ENCODE measurements at regions of chr14 and their contacts with region 1.

Region 1: GRCh38 chr14:75560962-75561432 is 17.4 kb upstream of the FLVCR2 start:
- DNase-seq: peak; percentile 79 to 88
- H3K4me3 ChIP-seq: no peak overlapping the region
- H3K27ac ChIP-seq: no peak overlapping the region
- H3K4me1 ChIP-seq: peaks cover 0 to 4% (median 2%) of the 10 kb centered on the region in 4 experiments; a peak in 3 of 7 replicates
- H3K27me3 ChIP-seq: no peaks in the 10 kb centered on the region
- CTCF ChIP-seq: peak; percentile 87 to 97 (median 90)
- EP300 ChIP-seq: peak in 1 of 2 experiments; percentile 67; a peak in 1 of 3 replicates
- POLR2A ChIP-seq: no peak
- RAD21 ChIP-seq: peak; percentile 90 to 93

Region 2: DNA sequence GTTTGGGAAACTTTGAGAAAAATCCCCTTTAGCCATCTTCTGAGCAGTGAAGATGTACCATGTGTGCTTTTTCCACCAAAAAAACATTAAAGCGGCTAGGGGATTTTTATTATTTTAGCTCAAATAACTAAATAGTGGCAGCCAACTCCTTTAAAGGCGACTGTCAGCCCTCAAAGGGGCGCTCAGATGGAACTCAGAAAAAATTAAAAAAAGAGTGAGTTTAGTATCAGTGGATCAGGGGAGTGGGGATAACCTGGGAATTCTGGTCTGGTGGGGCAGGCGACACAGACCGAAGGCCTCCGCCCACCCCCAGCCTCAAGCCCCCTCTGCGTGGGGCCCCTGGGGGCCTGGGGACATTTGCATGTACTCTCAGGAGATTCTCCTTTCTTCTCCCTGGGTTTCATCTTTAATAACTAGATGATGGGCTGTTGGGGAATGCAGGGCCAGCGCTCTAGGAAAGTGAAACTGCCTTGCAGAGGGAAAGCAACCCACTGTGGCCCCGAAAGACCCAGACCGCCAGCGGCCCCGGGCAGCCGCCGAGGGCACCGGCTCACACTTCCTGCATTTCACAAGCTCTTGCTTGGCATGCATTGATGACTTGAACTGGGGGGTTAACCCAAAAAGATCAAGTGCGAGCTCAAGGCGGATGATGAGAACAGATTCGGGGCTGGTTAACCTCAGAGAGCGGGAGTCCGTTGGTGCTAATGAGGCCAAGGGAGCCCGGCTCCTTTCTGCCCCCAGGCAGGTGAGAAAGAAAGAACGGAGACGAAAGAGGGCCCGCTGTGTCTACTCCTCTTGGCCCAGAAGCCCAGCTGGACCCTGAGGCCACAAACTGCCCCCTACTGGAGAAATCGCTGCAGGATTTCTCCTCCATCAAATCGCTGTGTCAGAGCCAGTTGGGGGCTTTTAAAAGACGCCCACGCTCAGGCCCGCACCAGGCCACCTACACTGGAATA is 46.0 kb before region 1 on chr14:
- CTCF ChIA-PET with region 1: interaction called, 135 read pairs
- POLR2A ChIA-PET with region 1: no interaction called
- DNase-seq: peak in 1 of 2 experiments; percentile 53
- H3K4me3 ChIP-seq: no peak overlapping the region
- H3K27ac ChIP-seq: no peak overlapping the region
- H3K4me1 ChIP-seq: peaks cover 0 to 4% (median 1%) of the 10 kb centered on the region in 4 experiments; a peak in 1 of 7 replicates
- H3K27me3 ChIP-seq: no peaks in the 10 kb centered on the region
- CTCF ChIP-seq: peak; percentile 15 to 47 (median 37)
- EP300 ChIP-seq: no peak
- POLR2A ChIP-seq: no peak
- RAD21 ChIP-seq: peak; percentile 22 to 45

Region 3: DNA sequence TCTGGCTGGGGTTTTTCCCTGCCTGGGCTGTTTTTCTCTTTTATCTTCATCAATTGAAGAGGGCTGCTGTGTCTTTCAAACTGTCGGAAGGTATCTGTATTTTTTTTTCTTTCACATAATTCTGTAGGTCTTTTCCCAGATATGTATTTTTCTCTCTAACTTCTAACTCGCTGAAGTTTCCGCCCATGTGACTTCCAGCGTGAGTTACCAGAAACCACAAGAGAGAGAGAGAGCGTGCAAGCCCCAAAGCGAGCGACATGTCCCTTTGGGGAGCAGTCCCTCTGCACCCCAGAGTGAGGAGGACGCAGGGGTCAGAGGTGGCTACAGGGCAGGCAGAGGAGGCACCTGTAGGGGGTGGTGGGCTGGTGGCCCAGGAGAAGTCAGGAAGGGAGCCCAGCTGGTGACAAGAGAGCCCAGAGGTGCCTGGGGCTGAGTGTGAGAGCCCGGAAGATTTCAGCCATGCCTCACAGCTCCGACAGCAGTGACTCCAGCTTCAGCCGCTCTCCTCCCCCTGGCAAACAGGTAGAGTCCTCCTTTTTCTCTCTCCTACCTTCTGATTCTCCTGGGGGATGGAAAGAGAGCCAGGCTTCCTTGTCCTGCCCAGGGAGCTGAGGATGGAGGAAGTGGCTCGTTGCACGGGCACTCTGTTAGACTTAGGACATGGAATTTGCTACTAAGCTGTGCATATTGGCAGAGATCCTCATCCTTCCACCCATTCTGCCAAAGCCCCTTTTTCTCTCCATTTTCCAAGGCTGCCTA is 38.6 kb before region 1 on chr14 and contains the start of gene BATF:
- CTCF ChIA-PET with region 1: interaction called, 135 read pairs
- POLR2A ChIA-PET with region 1: no interaction called
- DNase-seq: no peak
- H3K4me3 ChIP-seq: no peak within 1 kb of the TSS
- H3K27ac ChIP-seq: no peak within 1 kb of the TSS
- H3K4me1 ChIP-seq: no peaks in the 10 kb centered on the region; a peak in 1 of 7 replicates
- H3K27me3 ChIP-seq: no peaks in the 10 kb centered on the region
- CTCF ChIP-seq: no peak
- EP300 ChIP-seq: no peak
- POLR2A ChIP-seq: no peak
- RAD21 ChIP-seq: no peak
- total RNA-seq, gene BATF: not detected in 2 replicates

Region 4: GRCh38 chr14:75549169-75549568 is 11.8 kb before region 1 on chr14:
- CTCF ChIA-PET with region 1: interaction called, 39 read pairs
- POLR2A ChIA-PET with region 1: no interaction called
- DNase-seq: no peak
- H3K4me3 ChIP-seq: no peak overlapping the region
- H3K27ac ChIP-seq: no peak overlapping the region
- H3K4me1 ChIP-seq: no peaks in the 10 kb centered on the region; a peak in 1 of 7 replicates
- H3K27me3 ChIP-seq: peaks cover 0 to 2% (median 0%) of the 10 kb centered on the region in 4 experiments; a peak in 1 of 7 replicates
- CTCF ChIP-seq: no peak
- EP300 ChIP-seq: no peak
- POLR2A ChIP-seq: no peak
- RAD21 ChIP-seq: no peak

Region 5: DNA sequence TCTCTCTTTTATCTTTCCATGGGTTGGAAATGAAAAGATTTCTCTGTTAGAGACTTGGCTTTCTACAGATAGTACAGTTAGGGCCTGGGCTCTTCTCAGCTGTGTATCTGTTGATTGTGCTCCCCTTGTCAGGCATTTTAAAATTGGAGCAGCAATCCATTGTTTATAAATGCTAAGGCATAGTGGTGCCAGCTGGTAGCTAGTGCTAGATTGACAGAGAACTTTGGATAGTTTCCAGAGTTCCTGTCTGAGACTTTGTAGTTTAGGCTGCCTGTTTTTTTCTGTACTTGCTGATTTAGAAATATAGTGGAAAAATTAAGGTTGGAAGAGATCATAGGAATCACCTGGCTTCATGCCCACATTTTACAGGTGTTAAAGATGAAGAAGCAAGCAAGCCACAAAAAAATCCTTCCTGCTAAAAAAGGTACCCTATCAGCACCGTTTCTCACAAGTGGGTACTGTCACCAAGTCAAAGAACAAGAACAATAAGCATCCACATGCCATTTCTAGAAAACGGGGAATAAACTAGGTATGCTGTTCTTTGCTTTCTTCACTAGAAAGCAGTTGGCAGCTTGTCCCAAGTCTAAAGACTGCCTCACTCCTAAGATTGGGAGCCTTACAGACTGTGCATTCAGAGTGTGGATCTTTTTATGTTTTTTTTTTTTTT is 106.2 kb after region 1 on chr14:
- CTCF ChIA-PET with region 1: no interaction called
- POLR2A ChIA-PET with region 1: no interaction called
- DNase-seq: no peak
- H3K4me3 ChIP-seq: no peak overlapping the region
- H3K27ac ChIP-seq: no peak overlapping the region
- H3K4me1 ChIP-seq: no peaks in the 10 kb centered on the region; a peak in 1 of 7 replicates
- H3K27me3 ChIP-seq: no peaks in the 10 kb centered on the region
- CTCF ChIP-seq: no peak
- EP300 ChIP-seq: no peak
- POLR2A ChIP-seq: no peak
- RAD21 ChIP-seq: no peak

Measured in H1 (cell line).